K562 (cell line): ENCODE measurements at regions of chr4 and their contacts with region 1.

Region 1: DNA sequence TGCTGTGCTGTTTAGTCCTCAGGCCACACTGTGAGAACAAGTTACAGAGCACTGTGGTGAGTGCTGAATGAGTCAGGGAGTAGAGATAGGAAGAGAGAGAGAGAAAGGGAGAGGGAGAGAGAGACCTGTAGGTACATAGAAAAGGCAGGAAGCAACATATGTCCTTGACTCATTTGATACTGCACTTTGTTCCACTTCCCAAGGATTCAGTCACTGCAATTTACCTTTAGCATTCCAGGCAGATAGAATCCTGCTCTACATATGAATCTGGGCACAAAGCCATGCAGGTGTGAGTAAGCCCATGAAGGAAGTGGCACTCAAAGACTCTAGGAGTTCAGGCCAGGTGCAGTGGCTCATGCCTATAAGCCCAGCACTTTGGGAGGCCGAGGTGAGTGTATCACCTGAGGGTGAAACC is 1.0 kb upstream of the DAPP1 start:
- DNase-seq: no peak
- ATAC-seq: peak; percentile 42
- H3K4me3 ChIP-seq: no peak overlapping the region
- H3K27ac ChIP-seq: no peak overlapping the region
- H3K4me1 ChIP-seq: peaks cover 6 to 20% of the 10 kb centered on the region in 2 experiments; a peak in 3 of 5 replicates
- H3K27me3 ChIP-seq: no peaks in the 10 kb centered on the region
- CTCF ChIP-seq: no peak
- EP300 ChIP-seq: no peak
- POLR2A ChIP-seq: no peak
- RAD21 ChIP-seq: no peak

Region 2: DNA sequence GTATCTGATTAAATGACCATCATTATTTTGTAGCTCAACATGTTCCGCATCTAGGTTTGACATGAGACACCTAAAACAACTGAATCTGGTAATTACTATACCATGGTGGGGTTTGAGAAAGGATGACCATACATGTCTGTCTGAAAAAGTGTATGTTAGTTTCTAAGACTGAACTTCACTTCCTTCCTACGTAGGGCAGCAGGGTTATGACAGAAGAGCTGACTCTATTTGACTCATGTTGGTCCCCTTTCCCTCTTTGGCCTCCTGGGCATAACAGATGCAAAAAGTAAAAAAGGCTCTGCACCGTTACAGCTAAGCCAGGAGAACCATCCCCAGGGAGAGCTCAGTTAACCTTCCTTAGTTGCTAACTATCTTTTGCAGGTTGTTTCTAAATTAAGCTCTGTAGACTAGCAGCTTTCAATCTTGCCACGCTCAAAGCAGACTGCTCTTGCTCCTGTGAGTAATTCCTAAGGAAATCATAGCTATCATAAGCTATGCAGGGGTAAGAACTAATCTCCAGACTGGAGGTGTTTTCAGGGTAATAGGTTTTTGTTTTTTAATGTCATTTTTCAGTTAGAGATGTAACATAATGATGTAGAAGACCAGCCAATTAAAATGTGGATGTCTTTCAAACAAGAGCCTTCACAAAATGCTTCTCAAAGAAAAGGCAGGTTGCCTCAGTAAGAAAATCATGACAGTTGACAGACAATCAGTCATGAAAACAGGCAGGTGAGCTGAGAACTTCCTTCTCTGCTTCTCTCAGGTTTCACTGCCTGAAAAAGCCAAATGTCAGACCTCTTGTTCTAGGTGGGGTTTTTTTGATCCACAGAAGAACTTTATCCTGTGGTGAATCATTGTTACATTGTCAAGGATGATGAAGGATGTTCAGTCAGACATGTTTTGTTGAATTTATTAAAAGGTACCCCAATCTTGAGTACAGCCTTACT is 65.9 kb before region 1 on chr4:
- CTCF ChIA-PET with region 1: no interaction called
- POLR2A ChIA-PET with region 1: no interaction called
- in situ Hi-C with region 1: no loop called
- intact Hi-C with region 1: no loop called
- DNase-seq: no peak
- ATAC-seq: no peak
- H3K4me3 ChIP-seq: no peak overlapping the region
- H3K27ac ChIP-seq: no peak overlapping the region
- H3K4me1 ChIP-seq: no peaks in the 10 kb centered on the region
- H3K27me3 ChIP-seq: no peaks in the 10 kb centered on the region
- CTCF ChIP-seq: no peak
- EP300 ChIP-seq: no peak
- POLR2A ChIP-seq: no peak
- RAD21 ChIP-seq: no peak

Region 3: DNA sequence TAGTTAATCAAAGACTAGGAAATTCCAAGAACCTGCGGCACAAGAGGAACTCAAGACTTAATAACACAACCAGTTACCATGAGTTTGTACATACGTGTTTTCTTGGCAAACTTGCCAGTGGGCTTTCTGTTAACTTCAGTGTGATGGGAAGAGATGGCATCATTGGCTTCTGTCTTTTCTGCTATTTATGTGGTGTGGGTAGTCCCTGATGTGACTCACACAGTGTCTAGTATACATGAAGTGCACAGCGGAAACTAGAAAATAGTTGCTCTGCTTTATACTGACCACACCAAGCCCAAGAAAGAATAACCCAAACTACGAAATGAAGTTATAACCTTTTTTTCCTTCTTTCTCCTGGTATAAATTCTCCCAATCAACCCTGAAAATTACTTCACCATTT is 25.5 kb after region 1 on chr4:
- CTCF ChIA-PET with region 1: no interaction called
- POLR2A ChIA-PET with region 1: interaction called, 4 read pairs
- in situ Hi-C with region 1: no loop called
- intact Hi-C with region 1: loop called (anchors 2 kb)
- DNase-seq: no peak
- ATAC-seq: no peak
- H3K4me3 ChIP-seq: no peak overlapping the region
- H3K27ac ChIP-seq: no peak overlapping the region
- H3K4me1 ChIP-seq: peaks cover 0 to 26% of the 10 kb centered on the region in 2 experiments; a peak in 3 of 5 replicates
- H3K27me3 ChIP-seq: no peaks in the 10 kb centered on the region
- CTCF ChIP-seq: no peak
- EP300 ChIP-seq: no peak
- POLR2A ChIP-seq: no peak
- RAD21 ChIP-seq: no peak

Region 4: DNA sequence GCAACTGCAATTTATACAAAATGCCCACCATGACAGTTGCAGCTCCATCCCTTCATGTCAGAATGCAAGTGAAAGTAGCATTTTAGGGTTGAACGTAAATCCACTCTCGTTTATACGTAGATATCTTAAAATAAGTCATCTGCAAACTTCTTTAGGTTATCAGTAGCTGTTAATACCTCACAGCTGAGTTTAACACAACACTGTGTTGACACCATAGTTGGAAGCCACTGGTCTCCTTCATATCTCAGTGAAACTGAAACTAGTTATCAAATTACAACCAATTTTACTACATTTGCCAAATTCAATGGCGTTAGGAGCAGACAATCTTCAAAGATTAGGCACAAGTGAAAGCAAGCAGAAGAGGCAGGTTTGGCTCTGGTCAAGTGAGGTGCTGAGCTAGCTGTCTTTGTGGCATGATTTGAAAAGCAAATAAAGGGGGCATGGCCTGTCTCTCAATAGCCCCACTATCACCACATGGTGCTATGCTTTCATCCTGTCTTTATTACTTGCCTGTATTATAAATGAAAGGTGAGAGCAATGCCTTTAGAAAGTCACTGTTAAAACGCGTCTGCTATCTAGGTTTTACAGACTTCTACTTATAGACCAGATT is 1519.5 kb after region 1 on chr4:
- CTCF ChIA-PET with region 1: no interaction called
- POLR2A ChIA-PET with region 1: no interaction called
- in situ Hi-C with region 1: no loop called
- intact Hi-C with region 1: no loop called
- DNase-seq: no peak
- ATAC-seq: no peak
- H3K4me3 ChIP-seq: no peak overlapping the region
- H3K27ac ChIP-seq: no peak overlapping the region
- H3K4me1 ChIP-seq: no peaks in the 10 kb centered on the region
- H3K27me3 ChIP-seq: no peaks in the 10 kb centered on the region
- CTCF ChIP-seq: no peak
- EP300 ChIP-seq: no peak
- POLR2A ChIP-seq: no peak
- RAD21 ChIP-seq: no peak